PC-9 (cell line): ENCODE measurements at regions of chr6 and their contacts with region 1.

Region 1: GRCh38 chr6:44265007-44265721 is at the start of gene NFKBIE:
- DNase-seq: peak; percentile 63 to 90
- H3K4me3 ChIP-seq: peak within 1 kb of the TSS; percentile 89
- H3K27ac ChIP-seq: no peak within 1 kb of the TSS
- H3K4me1 ChIP-seq: peaks cover 21% of the 10 kb centered on the region
- H3K27me3 ChIP-seq: no peaks in the 10 kb centered on the region; the same call in 1 of the 2 replicates
- CTCF ChIP-seq: peak; percentile 39; the same call in 1 of the 2 replicates
- total RNA-seq, gene NFKBIE: 7.6 and 10.2 TPM in 2 replicates

Region 2: DNA sequence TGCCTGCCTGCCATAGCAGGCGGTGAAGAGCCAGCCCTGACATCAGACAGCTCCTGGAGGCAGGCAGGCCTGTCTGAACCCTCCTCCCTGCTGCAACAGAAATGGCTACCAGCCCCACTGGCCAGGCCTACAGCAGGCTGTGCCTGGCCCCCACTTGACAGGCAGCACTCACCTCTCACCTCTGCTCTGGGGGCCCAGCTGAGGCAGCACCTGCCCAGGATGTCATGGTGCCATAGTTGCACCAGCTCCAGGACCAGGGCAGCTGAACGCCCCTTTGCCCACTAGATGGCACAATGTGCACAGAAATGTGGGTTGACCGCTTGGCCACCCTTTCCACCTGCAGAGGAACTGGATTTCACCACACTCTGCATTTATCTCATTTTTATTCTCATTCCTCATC is 168.6 kb before region 1 on chr6:
- CTCF ChIA-PET with region 1: interaction called, 3 read pairs
- POLR2A ChIA-PET with region 1: no interaction called
- intact Hi-C with region 1: loop called (anchors 1 kb)
- DNase-seq: peak; percentile 55 to 73
- H3K4me3 ChIP-seq: no peak overlapping the region
- H3K27ac ChIP-seq: no peak overlapping the region
- H3K4me1 ChIP-seq: no peaks in the 10 kb centered on the region
- H3K27me3 ChIP-seq: no peaks in the 10 kb centered on the region
- CTCF ChIP-seq: peak; percentile 80

Region 3: GRCh38 chr6:44246663-44247337 is 18.4 kb before region 1 on chr6 and contains the start of gene HSP90AB1:
- CTCF ChIA-PET with region 1: no interaction called
- POLR2A ChIA-PET with region 1: interaction called, 11 read pairs
- intact Hi-C with region 1: no loop called
- DNase-seq: peak; percentile 94 to 97
- H3K4me3 ChIP-seq: peak within 1 kb of the TSS; percentile 98
- H3K27ac ChIP-seq: peak within 1 kb of the TSS; percentile 94
- H3K4me1 ChIP-seq: peaks cover 35% of the 10 kb centered on the region
- H3K27me3 ChIP-seq: no peaks in the 10 kb centered on the region
- CTCF ChIP-seq: no peak
- total RNA-seq, gene HSP90AB1: 895 and 1,136 TPM in 2 replicates

Region 4: DNA sequence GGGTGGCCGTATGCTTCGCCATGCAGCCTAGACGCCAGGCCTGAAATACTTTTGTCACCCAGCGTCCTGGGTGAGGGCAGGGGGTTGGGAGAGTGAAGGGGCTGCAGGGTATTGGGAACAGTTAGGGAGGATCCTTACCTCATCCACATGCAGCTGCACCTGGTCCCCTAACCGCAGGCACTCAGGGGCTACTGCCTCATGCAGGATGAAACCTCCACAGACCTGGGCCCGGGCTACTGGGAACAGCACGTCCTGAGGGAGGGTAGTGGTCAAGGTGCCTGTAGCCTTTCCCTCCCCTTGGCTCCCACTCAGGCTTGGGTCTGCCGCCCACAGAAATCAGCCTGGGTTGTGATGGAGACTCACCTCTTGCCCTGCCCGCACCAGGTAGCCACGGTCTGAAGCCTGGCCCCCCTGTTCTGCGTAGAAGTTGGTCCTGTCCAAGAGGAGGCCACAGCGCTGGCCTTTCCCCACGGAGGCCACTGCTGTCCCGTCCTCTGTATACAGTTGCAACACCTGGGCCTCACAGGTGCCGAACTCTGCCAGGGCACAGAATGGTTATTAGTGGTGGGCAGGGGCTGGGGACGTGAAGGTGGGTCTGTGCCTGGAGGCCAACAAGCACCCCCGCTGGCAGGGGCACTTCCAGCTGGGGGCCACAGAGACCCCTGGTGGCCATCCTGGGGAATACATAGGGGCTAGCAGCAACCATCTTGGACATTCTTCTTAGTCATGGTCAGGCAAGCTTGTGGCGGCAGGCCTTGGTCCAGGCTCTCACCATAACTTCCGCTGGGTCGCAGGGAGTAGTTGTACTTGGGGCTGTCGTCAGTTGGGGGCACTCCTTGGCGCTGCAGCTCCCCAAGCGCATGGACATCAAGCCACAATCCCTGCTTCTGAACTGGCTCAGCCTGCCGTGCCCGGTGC is 39.4 kb after region 1 on chr6:
- CTCF ChIA-PET with region 1: no interaction called
- POLR2A ChIA-PET with region 1: interaction called, 3 read pairs
- intact Hi-C with region 1: loop called (anchors 2 kb)
- DNase-seq: peak in 1 of 2 experiments; percentile 22
- H3K4me3 ChIP-seq: no peak overlapping the region
- H3K27ac ChIP-seq: no peak overlapping the region
- H3K4me1 ChIP-seq: no peaks in the 10 kb centered on the region
- H3K27me3 ChIP-seq: no peaks in the 10 kb centered on the region
- CTCF ChIP-seq: peak; percentile 78

Region 5: DNA sequence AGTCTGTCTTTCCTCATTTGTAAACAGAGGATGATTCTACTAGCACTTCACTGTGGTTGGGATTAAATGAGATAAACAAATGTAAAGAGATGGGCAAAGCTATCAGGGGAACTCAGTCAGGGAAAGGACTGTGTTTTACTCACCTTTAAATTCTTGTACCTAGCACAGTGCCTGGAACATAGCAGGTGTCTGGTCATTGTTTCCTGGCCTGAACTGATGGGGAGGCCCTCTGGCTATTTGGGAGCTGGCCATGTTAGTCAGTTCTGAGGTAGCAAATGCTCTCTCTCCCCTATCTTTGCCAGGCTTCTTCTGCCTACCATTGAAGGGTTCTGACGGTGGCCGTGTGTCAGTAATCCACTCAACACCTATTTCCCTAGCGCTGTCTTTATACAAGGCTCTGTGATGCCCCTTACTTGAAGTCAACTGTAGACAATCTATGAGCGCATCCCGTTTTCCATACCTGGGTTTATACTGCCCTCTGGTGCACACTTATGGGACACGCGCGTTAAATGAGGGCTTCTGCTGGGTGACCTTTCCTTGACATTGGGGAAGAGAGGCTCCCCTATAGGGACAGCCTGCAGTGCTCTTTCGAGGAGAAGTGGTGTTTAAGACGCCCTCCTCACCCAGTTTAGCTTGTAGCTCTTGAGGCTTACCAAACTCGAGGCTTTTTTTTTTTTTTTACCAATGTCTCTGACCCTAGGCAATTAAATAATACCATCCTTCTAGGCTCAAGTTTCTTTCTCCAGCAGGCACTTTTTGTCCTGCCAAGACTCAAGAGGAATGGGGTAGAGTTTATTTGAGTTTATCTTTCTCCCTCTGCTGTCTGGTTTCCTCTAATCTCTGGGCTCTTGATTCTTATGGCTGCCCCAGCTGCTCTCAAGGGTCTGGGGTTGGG is 73.3 kb after region 1 on chr6:
- CTCF ChIA-PET with region 1: interaction called, 14 read pairs
- POLR2A ChIA-PET with region 1: no interaction called
- intact Hi-C with region 1: loop called (anchors 1 kb)
- DNase-seq: peak in 1 of 2 experiments; percentile 56
- H3K4me3 ChIP-seq: no peak overlapping the region
- H3K27ac ChIP-seq: no peak overlapping the region
- H3K4me1 ChIP-seq: peaks cover 7% of the 10 kb centered on the region; the same call in 1 of the 2 replicates
- H3K27me3 ChIP-seq: peaks cover 15% of the 10 kb centered on the region; the same call in 1 of the 2 replicates
- CTCF ChIP-seq: peak; percentile 84

Region 6: GRCh38 chr6:44387346-44388133 is 122.4 kb after region 1 on chr6 and contains the start of gene CDC5L:
- CTCF ChIA-PET with region 1: no interaction called
- POLR2A ChIA-PET with region 1: no interaction called
- intact Hi-C with region 1: loop called (anchors 5 kb)
- DNase-seq: peak; percentile 94 to 95
- H3K4me3 ChIP-seq: peak within 1 kb of the TSS; percentile 58
- H3K27ac ChIP-seq: peak within 1 kb of the TSS; percentile 64
- H3K4me1 ChIP-seq: peaks cover 20% of the 10 kb centered on the region
- H3K27me3 ChIP-seq: 0 out of 2 replicates have a peak, but pooled peaks cover 5% of the 10 kb centered on the region
- CTCF ChIP-seq: no peak
- total RNA-seq, gene CDC5L: 17.8 and 24.0 TPM in 2 replicates

Region 7: GRCh38 chr6:44456070-44456965 is 191.2 kb after region 1 on chr6:
- CTCF ChIA-PET with region 1: no interaction called
- POLR2A ChIA-PET with region 1: no interaction called
- intact Hi-C with region 1: loop called (anchors 5 kb)
- DNase-seq: peak in 1 of 2 experiments; percentile 33
- H3K4me3 ChIP-seq: peak overlapping the region; percentile 33; the same call in 1 of the 2 replicates
- H3K27ac ChIP-seq: no peak overlapping the region
- H3K4me1 ChIP-seq: peaks cover 24% of the 10 kb centered on the region; the same call in 1 of the 2 replicates
- H3K27me3 ChIP-seq: no peaks in the 10 kb centered on the region
- CTCF ChIP-seq: peak; percentile 90